HEK293T (cell line): ENCODE measurements at regions of chr18 and their contacts with region 1.

Region 1: GRCh38 chr18:24488824-24489493 is 28.5 kb downstream of the HRH4 start:
- DNase-seq: peak; percentile 52

Region 2: DNA sequence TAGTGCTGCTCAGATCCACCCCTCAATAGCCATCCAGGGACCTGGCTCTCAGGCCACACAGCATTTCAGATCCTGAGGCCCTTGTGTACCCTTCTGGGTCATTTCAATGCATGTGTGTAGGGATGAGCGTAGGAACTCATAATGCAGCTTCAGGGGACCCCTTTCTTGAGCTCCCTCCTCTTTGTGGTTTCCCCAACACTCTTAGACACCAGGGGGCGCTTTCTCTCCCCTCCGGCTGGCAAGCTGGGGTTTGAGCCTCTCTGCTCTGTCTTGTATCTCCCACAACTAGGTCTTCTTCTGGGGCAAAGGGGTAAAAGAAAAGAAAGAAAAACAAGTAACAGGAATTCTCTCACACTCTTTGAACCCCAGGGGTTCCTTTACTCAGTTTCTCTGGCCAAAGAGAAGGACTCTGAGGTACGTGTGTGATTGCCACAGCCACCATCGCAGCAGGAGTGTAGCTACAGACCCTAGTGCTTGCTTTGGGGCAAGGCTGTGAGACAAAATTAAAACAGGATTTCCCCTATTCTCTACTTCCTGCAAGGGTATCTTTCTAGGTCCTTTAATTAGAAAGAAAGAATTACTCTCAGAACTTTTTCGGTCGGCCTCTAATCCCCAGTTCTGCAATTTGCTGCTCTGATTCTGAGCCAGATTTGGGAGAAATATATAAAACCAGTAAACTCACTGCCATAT is 312.1 kb before region 1 on chr18:
- CTCF ChIA-PET with region 1: interaction called, 25 read pairs
- POLR2A ChIA-PET with region 1: no interaction called
- DNase-seq: peak; percentile 76

Region 3: GRCh38 chr18:24362758-24363157 is 126.2 kb before region 1 on chr18:
- CTCF ChIA-PET with region 1: interaction called, 28 read pairs
- POLR2A ChIA-PET with region 1: no interaction called
- DNase-seq: no peak

Region 4: DNA sequence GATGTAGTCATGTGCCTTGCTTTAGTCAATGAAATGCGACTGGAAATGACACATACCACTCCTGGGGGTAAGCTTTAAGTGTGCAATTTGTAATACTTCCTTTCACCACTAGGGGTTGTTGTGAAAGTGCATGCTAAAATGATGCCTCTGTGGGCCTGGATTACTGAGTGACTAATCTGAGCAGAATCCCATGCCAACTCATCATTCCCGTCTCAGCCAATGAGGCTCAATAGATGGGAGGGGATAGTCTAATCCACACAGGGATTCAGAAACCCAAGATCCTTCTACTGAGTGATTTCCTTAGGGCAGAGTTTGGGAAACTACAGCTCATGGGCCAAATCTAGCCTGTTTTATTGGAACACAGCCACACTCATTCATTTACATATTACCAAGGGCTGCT is 25.5 kb after region 1 on chr18:
- CTCF ChIA-PET with region 1: interaction called, 10 read pairs
- POLR2A ChIA-PET with region 1: no interaction called
- DNase-seq: peak; percentile 77

Region 5: GRCh38 chr18:24538414-24539264 is 49.7 kb after region 1 on chr18:
- CTCF ChIA-PET with region 1: interaction called, 11 read pairs
- POLR2A ChIA-PET with region 1: no interaction called
- DNase-seq: peak; percentile 42

Region 6: GRCh38 chr18:24543805-24544498 is 55.0 kb after region 1 on chr18:
- CTCF ChIA-PET with region 1: interaction called, 11 read pairs
- POLR2A ChIA-PET with region 1: no interaction called
- DNase-seq: peak; percentile 70

Region 7: GRCh38 chr18:24726727-24727492 is 238.0 kb after region 1 on chr18:
- CTCF ChIA-PET with region 1: interaction called, 27 read pairs
- POLR2A ChIA-PET with region 1: no interaction called
- DNase-seq: peak; percentile 62

Region 8: DNA sequence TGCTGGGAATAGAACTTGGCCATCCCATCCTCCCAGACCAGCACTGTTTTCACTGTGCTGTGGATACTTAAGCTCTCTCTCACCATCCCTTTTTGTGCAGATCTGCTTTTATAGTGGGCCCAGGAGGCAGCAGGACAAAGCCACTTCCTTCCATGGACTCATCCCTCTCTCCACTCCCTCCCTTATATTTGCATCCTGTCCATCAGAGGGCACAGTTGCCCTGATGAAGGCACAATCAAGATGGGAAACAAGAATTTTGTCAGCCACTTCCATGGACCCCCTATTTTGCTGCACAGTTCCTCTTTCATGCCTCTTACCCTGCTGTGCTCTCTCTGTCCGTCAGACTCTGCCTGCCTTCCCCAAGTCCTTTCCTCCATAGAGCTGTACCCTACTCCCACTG is 310.2 kb after region 1 on chr18:
- CTCF ChIA-PET with region 1: no interaction called
- POLR2A ChIA-PET with region 1: no interaction called
- DNase-seq: no peak

Region 9: GRCh38 chr18:24868760-24869237 is 379.8 kb after region 1 on chr18:
- CTCF ChIA-PET with region 1: no interaction called
- POLR2A ChIA-PET with region 1: no interaction called
- DNase-seq: peak; percentile 27